Heart left ventricle (tissue), 16 donors: ENCODE measurements at regions of chr5 and their contacts with region 1.

Region 1: GRCh38 chr5:88140856-88141752 is 127.5 kb downstream of the TMEM161B start:
- DNase-seq: peak; percentile 93 to 96 (median 94)
- ATAC-seq: peak; percentile 97 to 99 (median 99)
- H3K4me3 ChIP-seq: peak overlapping the region; percentile 31 to 65 (median 54)
- H3K27ac ChIP-seq: peak overlapping the region in 5 of 12 donors; percentile 6 to 62 (median 31)
- H3K4me1 ChIP-seq: peaks cover 0 to 47% (median 24%) of the 10 kb centered on the region in 12 donors
- H3K27me3 ChIP-seq: peaks cover 9 to 77% (median 47%) of the 10 kb centered on the region in 9 donors
- CTCF ChIP-seq: peak; percentile 44 to 90 (median 78)
- POLR2A ChIP-seq: peak in 1 of 2 donors; percentile 54

Region 2: GRCh38 chr5:87770601-87771121 is 370.4 kb before region 1 on chr5:
- intact Hi-C with region 1: loop called in 1 of 10 experiments (anchors 10 kb)
- DNase-seq: no peak
- ATAC-seq: no peak
- H3K4me3 ChIP-seq: no peak overlapping the region
- H3K27ac ChIP-seq: no peak overlapping the region
- H3K4me1 ChIP-seq: no peaks in the 10 kb centered on the region
- H3K27me3 ChIP-seq: peaks cover 0 to 63% (median 12%) of the 10 kb centered on the region in 9 donors
- CTCF ChIP-seq: no peak
- POLR2A ChIP-seq: no peak

Region 3: GRCh38 chr5:87787625-87788256 is 353.4 kb before region 1 on chr5:
- intact Hi-C with region 1: loop called in 9 of 10 experiments (anchors 5 to 10 kb)
- DNase-seq: no peak
- ATAC-seq: no peak
- H3K4me3 ChIP-seq: no peak overlapping the region
- H3K27ac ChIP-seq: no peak overlapping the region
- H3K4me1 ChIP-seq: no peaks in the 10 kb centered on the region
- H3K27me3 ChIP-seq: peaks cover 0 to 87% (median 22%) of the 10 kb centered on the region in 9 donors
- CTCF ChIP-seq: no peak
- POLR2A ChIP-seq: no peak

Region 4: GRCh38 chr5:88268385-88269184 is 127.5 kb after region 1 on chr5 and contains the start of gene TMEM161B:
- intact Hi-C with region 1: loop called in 1 of 10 experiments (anchors 5 kb)
- DNase-seq: peak; percentile 90 to 95 (median 94)
- ATAC-seq: peak; percentile 98 to 100 (median 100)
- H3K4me3 ChIP-seq: peak within 1 kb of the TSS; percentile 62 to 94 (median 88)
- H3K27ac ChIP-seq: peak within 1 kb of the TSS; percentile 22 to 84 (median 76)
- H3K4me1 ChIP-seq: peaks cover 0 to 45% (median 31%) of the 10 kb centered on the region in 12 donors
- H3K27me3 ChIP-seq: no peaks in the 10 kb centered on the region
- CTCF ChIP-seq: no peak
- POLR2A ChIP-seq: peak in 1 of 2 donors; percentile 61
- total RNA-seq, gene TMEM161B: 4.3 to 13.2 (median 10.3) TPM

Region 5: DNA sequence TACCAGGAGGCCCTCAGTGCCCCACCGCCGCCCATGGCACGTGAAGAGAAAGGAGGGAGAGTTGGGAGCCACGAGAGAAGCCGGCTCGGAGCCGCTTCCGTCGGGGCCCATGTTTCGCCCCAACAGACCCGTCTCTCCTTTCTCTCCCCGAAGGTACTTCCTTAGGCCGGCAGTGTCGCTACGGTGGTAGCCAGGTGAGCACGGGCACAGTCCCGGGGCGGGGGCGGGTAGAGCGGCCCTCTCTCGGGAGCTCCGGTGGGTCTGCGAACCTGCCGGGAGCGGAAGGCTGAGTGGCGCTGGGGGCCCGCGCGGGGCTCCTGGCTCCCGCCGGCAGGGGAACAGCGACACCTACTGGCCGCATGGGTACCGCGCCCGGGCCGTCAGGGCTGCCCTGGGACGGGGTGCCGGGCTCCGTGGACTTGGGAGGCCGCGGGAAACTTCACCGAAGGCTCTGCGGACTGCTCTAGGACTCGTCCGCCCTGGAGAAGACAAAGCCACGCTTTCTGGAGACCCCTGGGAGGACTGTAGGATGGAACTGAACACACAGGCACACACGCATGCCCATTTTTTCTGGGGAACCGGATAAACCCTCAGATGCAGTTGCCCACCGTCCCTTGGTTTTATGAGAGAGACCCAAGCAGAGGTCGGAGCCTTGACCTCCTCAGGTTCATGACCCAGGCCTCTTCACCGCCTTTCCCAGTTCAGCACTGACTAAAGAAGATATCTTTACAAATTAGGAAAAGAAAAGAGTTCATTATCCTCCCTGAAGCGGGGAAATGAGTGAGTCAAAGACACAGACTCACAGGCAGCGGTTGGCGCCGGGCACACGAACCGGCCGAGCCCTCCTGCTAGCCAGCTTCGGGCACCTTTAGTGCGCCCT is 539.4 kb after region 1 on chr5:
- intact Hi-C with region 1: loop called in 9 of 10 experiments (anchors 1 to 5 kb)
- DNase-seq: peak; percentile 52 to 89 (median 68)
- ATAC-seq: peak; percentile 75 to 97 (median 92)
- H3K4me3 ChIP-seq: peak overlapping the region in 9 of 12 donors; percentile 19 to 53 (median 38)
- H3K27ac ChIP-seq: no peak overlapping the region
- H3K4me1 ChIP-seq: peaks cover 0 to 38% (median 12%) of the 10 kb centered on the region in 12 donors
- H3K27me3 ChIP-seq: peaks cover 77 to 100% (median 98%) of the 10 kb centered on the region in 9 donors
- CTCF ChIP-seq: peak; percentile 84 to 98 (median 96)
- POLR2A ChIP-seq: no peak